Ascending aorta (tissue), 2 donors: ENCODE measurements at regions of chr10 and their contacts with region 1.

Region 1: DNA sequence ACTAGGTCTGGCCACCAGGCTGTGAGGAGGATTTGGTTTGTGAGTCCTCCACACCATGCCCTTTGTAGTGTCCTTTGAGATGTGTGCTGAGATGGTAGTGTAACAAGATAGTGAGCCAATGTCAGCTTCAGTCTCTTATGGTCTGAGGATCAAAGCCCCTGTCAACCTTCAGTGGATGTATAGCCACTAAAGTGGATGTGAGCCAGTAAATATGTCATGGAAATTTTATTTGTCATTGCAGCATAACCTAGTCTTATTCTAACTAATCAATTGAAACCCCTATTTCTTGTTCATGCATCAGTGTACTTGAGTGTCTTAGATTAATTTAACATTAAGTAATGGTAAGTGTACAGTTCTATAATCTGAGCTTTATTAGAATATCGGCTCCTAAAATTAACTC is 51.0 kb upstream of the WAC start:
- DNase-seq: no peak
- H3K4me3 ChIP-seq: no peak overlapping the region
- H3K27ac ChIP-seq: no peak overlapping the region
- H3K4me1 ChIP-seq: no peaks in the 10 kb centered on the region
- H3K27me3 ChIP-seq: no peaks in the 10 kb centered on the region
- CTCF ChIP-seq: no peak

Region 2: DNA sequence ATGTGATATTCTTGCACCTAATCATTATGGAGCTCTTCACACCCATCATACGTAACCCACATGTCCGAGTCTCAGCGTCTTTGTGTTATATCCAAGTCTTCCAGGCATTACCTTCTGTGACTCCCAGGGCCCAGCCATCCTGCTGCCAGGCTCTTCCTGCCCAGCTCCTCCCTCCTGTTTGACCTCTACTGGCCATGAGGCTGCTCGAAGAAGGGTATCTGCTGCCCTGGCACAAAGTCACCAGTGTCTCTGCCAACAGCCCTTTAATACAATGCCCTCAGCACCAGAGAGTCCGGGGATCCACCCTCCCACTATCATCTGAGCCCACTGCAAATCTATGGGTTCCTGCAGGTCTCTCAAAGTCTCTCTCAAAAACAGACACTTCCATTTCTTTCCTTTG is 14.4 kb before region 1 on chr10:
- intact Hi-C with region 1: loop called (anchors 2 kb)
- DNase-seq: no peak
- H3K4me3 ChIP-seq: no peak overlapping the region
- H3K27ac ChIP-seq: no peak overlapping the region
- H3K4me1 ChIP-seq: no peaks in the 10 kb centered on the region
- H3K27me3 ChIP-seq: no peaks in the 10 kb centered on the region
- CTCF ChIP-seq: no peak